K562 (cell line): ENCODE measurements at regions of chr18 and their contacts with region 1.

Region 1: GRCh38 chr18:24600076-24600654 is 139.7 kb downstream of the HRH4 start:
- DNase-seq: peak; percentile 28 to 50 (median 33)
- ATAC-seq: peak; percentile 72
- H3K4me3 ChIP-seq: no peak overlapping the region
- H3K27ac ChIP-seq: no peak overlapping the region
- H3K4me1 ChIP-seq: no peaks in the 10 kb centered on the region
- H3K27me3 ChIP-seq: no peaks in the 10 kb centered on the region
- CTCF ChIP-seq: peak in 2 of 3 experiments; percentile 46 to 52; a peak in 3 of 6 replicates
- EP300 ChIP-seq: no peak
- POLR2A ChIP-seq: no peak
- RAD21 ChIP-seq: peak; percentile 55 to 68

Region 2: GRCh38 chr18:24362758-24363157 is 237.4 kb before region 1 on chr18:
- CTCF ChIA-PET with region 1: no interaction called
- POLR2A ChIA-PET with region 1: no interaction called
- in situ Hi-C with region 1: no loop called
- intact Hi-C with region 1: loop called (anchors 5 kb)
- DNase-seq: no peak
- ATAC-seq: no peak
- H3K4me3 ChIP-seq: no peak overlapping the region
- H3K27ac ChIP-seq: no peak overlapping the region
- H3K4me1 ChIP-seq: no peaks in the 10 kb centered on the region
- H3K27me3 ChIP-seq: peaks cover 0 to 7% of the 10 kb centered on the region in 2 experiments; a peak in 1 of 5 replicates
- CTCF ChIP-seq: no peak
- EP300 ChIP-seq: no peak
- POLR2A ChIP-seq: no peak
- RAD21 ChIP-seq: no peak

Region 3: GRCh38 chr18:24543805-24544498 is 56.2 kb before region 1 on chr18:
- CTCF ChIA-PET with region 1: no interaction called
- POLR2A ChIA-PET with region 1: interaction called, 3 read pairs
- in situ Hi-C with region 1: no loop called
- intact Hi-C with region 1: loop called (anchors 10 kb)
- DNase-seq: peak; percentile 40 to 49 (median 44)
- ATAC-seq: peak; percentile 68
- H3K4me3 ChIP-seq: no peak overlapping the region
- H3K27ac ChIP-seq: no peak overlapping the region
- H3K4me1 ChIP-seq: no peaks in the 10 kb centered on the region
- H3K27me3 ChIP-seq: no peaks in the 10 kb centered on the region
- CTCF ChIP-seq: peak; percentile 39 to 62 (median 51); a peak in 4 of 6 replicates
- EP300 ChIP-seq: no peak
- POLR2A ChIP-seq: no peak
- RAD21 ChIP-seq: peak; percentile 45 to 47; a peak in 3 of 4 replicates